AG04449 (cell line): ENCODE measurements at regions of chr2 and their contacts with region 1.

Region 1: GRCh38 chr2:199979832-199980628 is 24.6 kb downstream of the MAIP1 start:
- DNase-seq: peak; percentile 10
- H3K4me3 ChIP-seq: peak overlapping the region; percentile 7; the same call in 1 of the 2 replicates
- CTCF ChIP-seq: peak; percentile 56

Region 2: GRCh38 chr2:199431746-199432213 is 548.2 kb before region 1 on chr2:
- CTCF ChIA-PET with region 1: no interaction called
- POLR2A ChIA-PET with region 1: no interaction called
- DNase-seq: no peak
- H3K4me3 ChIP-seq: no peak overlapping the region
- CTCF ChIP-seq: no peak

Region 3: DNA sequence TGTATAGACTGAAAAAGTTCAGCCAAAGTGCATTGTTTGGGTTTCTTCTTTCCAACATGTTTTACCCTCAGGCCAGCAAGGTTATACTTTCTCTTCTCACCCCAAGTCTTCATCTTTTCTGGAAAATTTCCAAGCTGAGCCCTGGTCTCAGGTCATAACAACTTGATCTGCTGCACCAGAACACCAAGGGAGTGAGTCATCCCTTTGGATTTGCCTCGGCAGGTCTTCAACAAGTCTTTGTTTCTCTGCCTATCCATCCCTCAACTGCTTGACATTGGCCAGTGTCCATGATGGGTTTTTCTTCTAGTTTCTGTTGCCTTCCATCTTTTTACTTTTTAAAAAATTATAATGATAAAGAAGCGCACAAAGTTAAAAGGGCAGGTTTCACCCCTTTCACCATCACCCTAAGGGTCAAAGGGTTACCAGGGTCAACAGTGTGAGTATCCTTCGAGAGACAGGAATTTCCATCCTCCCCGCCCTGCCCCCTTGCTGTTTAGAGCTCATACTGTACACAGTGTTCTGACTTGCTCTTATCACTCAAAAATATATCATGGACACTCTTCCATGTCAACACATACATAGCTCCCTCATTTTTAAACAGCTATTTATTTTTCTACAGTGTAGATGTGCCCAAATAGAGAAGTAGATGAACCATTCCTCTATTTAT is 320.8 kb after region 1 on chr2:
- CTCF ChIA-PET with region 1: interaction called, 22 read pairs
- POLR2A ChIA-PET with region 1: no interaction called
- DNase-seq: no peak
- H3K4me3 ChIP-seq: no peak overlapping the region
- CTCF ChIP-seq: no peak

Region 4: DNA sequence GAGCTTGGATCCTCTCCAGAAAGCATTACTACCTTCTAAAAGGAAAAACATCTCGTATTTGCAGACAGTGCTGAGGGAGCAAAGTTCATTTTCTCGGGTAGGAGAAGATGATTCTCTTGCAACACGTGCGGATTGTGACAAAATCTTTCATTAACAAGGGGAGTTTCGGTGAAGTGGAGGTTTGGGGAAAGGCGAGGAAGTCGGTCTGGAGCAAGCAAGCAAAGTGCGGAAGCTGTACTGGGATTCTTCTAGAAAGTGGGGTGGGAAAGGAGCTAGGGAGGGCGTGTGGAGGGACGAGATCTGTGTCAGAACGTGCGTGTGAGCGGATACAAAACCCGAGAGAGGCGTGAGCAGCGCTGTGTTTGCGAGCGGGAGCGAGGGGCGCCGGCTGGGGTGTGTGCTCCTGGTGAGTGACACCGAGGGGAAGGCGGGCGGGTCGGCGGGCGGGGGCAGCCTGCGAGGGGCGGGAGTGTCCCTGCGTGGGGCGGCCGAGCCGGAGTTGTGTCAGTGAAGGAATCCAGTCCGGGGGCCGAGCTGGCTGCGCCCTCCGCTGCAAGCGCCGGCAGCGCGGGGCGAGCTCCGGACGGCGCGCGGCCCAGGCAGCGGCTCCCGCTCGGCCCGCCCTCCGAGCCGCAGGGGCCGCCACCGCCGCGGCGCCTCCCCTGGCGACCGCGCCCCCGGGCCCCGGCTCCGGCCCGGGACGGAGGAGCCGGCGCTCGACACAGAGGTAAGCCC is 326.3 kb after region 1 on chr2 and contains the start of gene SPATS2L:
- CTCF ChIA-PET with region 1: interaction called, 26 read pairs
- POLR2A ChIA-PET with region 1: no interaction called
- DNase-seq: no peak
- H3K4me3 ChIP-seq: peak within 1 kb of the TSS; percentile 77
- CTCF ChIP-seq: no peak

Region 5: GRCh38 chr2:200405599-200406298 is 425.7 kb after region 1 on chr2:
- CTCF ChIA-PET with region 1: interaction called, 12 read pairs
- POLR2A ChIA-PET with region 1: no interaction called
- DNase-seq: no peak
- H3K4me3 ChIP-seq: no peak overlapping the region; the same call in 1 of the 2 replicates
- CTCF ChIP-seq: no peak

Region 6: GRCh38 chr2:200471324-200471848 is 491.4 kb after region 1 on chr2:
- CTCF ChIA-PET with region 1: interaction called, 242 read pairs
- POLR2A ChIA-PET with region 1: no interaction called
- DNase-seq: no peak
- H3K4me3 ChIP-seq: no peak overlapping the region
- CTCF ChIP-seq: peak; percentile 52